PC-9 (cell line): ENCODE measurements at regions of chr2 and their contacts with region 1.

Region 1: DNA sequence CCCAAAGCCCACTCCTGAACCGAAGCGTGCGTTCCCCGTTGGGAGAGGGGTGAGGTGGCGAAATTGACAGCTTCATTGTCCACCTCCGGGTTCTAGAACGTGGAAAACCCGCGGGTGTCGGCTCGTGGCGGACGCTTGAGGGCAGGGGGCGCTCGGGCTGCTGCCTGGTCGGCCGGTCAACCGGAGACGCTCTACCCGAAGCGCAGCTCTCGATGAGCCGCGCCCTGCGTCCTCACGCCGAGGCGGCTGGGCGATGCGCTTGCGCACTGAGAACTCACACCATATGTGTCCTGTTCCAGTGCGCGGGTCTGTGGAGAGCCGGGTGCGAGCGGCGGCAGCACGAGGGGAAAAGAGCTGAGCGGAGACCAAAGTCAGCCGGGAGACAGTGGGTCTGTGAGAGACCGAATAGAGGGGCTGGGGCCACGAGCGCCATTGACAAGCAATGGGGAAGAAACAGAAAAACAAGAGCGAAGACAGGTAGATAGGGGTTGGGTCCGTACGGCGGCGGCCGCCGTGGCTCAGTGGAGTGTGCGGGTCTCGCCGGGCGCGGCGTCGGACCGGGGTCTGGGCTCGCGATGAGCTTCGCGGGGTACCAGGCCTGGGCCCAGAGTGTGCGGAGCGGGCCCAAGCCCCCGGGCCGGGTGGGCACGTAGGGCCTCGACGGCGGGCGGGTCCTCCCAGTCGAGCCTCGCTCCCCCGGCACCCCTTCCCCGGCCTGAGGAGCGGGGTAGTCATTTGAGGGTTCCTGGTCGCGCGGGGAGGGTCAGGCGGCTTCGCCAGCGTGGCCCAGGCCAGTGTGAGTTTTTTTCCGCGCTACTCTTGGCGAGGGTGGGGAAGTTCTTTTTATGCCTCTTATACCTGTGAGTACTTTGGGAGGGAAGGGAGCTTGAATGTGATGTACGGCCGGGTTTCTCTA is at the start of gene EIF5B:
- DNase-seq: peak; percentile 91 to 95
- H3K4me3 ChIP-seq: peak within 1 kb of the TSS; percentile 79
- H3K27ac ChIP-seq: peak within 1 kb of the TSS; percentile 77
- H3K4me1 ChIP-seq: peaks cover 29% of the 10 kb centered on the region
- H3K27me3 ChIP-seq: no peaks in the 10 kb centered on the region
- CTCF ChIP-seq: peak; percentile 75
- total RNA-seq, gene EIF5B: 53.4 and 56.7 TPM in 2 replicates

Region 2: DNA sequence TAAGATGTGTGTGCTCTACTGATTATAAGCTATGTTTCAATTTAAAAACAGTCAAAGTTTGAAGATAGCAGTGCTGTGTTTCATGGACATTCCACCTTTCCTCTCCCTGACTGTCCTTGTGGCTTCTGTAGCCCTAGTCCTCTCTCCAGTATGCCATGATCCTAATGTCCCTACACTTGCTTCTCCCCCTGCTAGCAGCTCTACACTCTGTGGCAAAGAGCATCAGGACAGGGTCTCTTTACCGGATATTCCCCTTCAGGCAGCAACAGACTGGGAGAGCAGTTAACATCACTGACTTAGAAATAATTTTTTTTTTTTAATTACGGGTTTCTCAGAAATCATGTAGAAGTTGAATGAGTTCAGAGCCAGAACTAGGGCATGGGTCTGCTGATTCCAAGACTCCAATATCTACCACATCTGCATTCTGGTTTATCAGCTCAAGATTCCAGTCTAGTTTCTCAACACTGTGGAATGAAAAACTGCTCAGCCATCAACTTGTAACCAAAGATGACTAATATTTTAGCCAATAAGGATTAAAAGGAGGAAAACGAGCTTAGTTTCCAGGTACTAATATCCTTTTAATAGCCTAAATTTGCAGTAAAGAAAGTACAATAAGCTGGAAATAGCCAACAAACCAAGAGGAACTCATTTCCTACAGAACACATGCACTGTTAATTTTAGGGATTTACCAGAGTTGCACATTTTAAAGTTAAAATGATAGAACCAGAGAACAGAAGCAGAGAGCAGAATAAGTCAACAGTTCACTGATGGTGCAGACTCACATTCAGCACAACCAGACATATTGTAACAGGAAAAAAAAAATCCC is 1386.8 kb before region 1 on chr2:
- CTCF ChIA-PET with region 1: no interaction called
- POLR2A ChIA-PET with region 1: interaction called, 11 read pairs
- intact Hi-C with region 1: no loop called
- DNase-seq: peak; percentile 35 to 88
- H3K4me3 ChIP-seq: no peak overlapping the region; the same call in 1 of the 2 replicates
- H3K27ac ChIP-seq: peak overlapping the region; percentile 56
- H3K4me1 ChIP-seq: peaks cover 30% of the 10 kb centered on the region
- H3K27me3 ChIP-seq: no peaks in the 10 kb centered on the region
- CTCF ChIP-seq: no peak

Region 3: DNA sequence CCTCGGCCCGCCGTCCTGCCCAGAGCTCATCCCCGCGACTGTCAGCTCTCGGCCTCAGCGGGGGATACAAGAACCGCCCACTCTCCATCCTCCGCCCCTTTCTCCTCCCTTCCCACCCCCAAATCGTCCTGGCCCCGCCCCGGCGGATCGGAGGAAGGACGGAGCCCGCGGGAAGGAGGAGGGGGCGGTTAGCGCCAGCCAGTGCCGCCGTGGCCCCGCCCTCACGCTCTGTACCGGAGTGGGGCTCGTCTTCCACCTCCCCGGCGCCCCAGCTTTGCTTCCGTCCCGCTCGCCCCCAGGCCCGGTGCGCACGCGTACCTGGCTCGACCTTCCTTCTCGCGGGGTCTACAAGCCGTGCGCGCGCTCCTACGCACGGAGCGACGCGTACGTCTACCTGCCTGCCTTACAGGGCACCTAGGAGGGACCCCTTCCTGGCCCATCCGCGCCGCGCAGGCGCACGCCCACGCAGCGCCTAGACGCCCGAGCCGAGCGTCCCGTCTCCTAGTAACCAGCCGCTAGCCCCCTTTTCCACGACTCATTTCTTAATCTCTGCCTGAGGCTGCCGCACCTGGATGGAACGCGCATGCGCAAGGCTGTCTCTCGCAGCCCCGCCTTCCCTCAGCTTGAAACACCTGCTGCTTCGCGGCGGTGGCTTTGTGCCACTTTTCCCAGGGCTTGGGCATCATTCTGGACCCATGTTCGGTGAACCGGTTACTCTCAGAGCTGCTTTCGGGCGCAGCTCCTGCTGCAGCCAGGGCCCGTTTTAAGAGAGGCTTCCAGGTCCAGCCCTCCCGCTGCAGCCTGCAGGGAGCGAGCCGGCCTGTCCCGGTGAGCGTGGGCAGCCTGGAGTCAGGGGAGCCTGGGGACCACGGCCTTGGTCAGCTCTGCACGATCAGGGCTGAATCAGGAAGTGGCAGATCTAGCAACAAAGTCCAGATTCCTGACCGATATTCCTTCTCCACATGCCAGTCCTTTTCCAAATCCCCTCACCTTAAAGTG is 196.0 kb before region 1 on chr2 and contains the start of gene C2orf15:
- CTCF ChIA-PET with region 1: interaction called, 4 read pairs
- POLR2A ChIA-PET with region 1: interaction called, 8 read pairs
- intact Hi-C with region 1: loop called (anchors 1 kb)
- DNase-seq: peak; percentile 94 to 99
- H3K4me3 ChIP-seq: peak within 1 kb of the TSS; percentile 86
- H3K27ac ChIP-seq: peak within 1 kb of the TSS; percentile 64
- H3K4me1 ChIP-seq: peaks cover 24% of the 10 kb centered on the region
- H3K27me3 ChIP-seq: no peaks in the 10 kb centered on the region
- CTCF ChIP-seq: no peak
- total RNA-seq, gene C2orf15: 16.9 and 18.0 TPM in 2 replicates

Region 4: DNA sequence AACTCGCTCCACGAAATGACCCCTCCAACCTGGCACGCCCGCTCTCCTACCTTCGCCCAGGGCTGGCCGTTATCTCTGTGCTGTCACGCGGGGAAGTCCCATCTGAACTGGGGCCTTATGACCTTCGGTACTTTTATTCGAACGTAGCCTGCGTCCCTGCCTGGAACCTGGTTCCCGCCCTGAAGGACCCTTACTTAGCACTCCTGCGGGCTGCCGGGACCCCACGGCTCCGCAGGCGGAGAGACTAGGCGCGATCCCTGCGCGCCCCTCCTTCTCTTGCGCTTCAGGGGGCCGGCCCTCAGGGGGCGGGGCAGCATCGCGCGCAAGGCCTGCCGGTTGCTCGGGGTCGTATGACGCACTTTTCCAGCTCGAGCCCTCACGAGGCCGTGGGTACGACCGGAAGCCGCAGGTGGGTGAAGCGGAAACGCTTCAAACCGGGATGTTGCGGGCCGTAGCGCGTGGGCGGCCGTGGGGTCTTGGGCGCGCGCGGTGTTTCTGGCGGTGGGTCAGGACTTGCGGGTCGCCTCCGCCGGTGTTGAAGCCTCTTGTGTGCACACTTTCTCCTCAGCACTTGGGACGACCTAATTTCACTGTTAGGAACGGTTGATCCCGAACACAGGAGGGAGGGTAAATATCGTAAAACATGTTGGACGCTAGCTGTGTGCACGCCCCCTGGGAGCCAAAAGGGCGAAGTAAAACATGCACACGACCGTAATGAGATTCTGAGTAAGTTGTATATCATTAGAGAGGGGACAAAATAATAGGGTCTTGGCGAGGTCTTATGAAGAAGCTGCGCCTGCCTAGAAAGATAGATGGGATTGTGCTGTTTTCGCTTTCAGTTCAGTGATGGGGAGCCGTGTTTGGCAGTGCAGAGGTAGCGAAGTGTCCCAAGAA is 182.5 kb before region 1 on chr2 and contains the starts of genes LIPT1 and TSGA10:
- CTCF ChIA-PET with region 1: no interaction called
- POLR2A ChIA-PET with region 1: interaction called, 5 read pairs
- intact Hi-C with region 1: loop called (anchors 1 kb)
- DNase-seq: peak; percentile 81 to 89
- H3K4me3 ChIP-seq: peak within 1 kb of the TSS; percentile 68
- H3K27ac ChIP-seq: peak within 1 kb of the TSS; percentile 77
- H3K4me1 ChIP-seq: peaks cover 18% of the 10 kb centered on the region
- H3K27me3 ChIP-seq: no peaks in the 10 kb centered on the region
- CTCF ChIP-seq: peak; percentile 50
- total RNA-seq, gene LIPT1: 10.3 and 11.6 TPM in 2 replicates
- total RNA-seq, gene TSGA10: 13.5 and 14.9 TPM in 2 replicates

Region 5: GRCh38 chr2:99180755-99181623 is 156.4 kb before region 1 on chr2 and contains the starts of genes MITD1 and MRPL30:
- CTCF ChIA-PET with region 1: interaction called, 12 read pairs
- POLR2A ChIA-PET with region 1: interaction called, 12 read pairs
- intact Hi-C with region 1: no loop called
- DNase-seq: peak; percentile 92 to 93
- H3K4me3 ChIP-seq: peak within 1 kb of the TSS; percentile 84
- H3K27ac ChIP-seq: peak within 1 kb of the TSS; percentile 56
- H3K4me1 ChIP-seq: peaks cover 37% of the 10 kb centered on the region
- H3K27me3 ChIP-seq: no peaks in the 10 kb centered on the region
- CTCF ChIP-seq: no peak
- total RNA-seq, gene MITD1: 35.0 and 37.6 TPM in 2 replicates
- total RNA-seq, gene MRPL30: 50.1 and 52.6 TPM in 2 replicates

Region 6: GRCh38 chr2:100562732-100563720 is 1225.7 kb after region 1 on chr2 and contains the start of gene PDCL3:
- CTCF ChIA-PET with region 1: no interaction called
- POLR2A ChIA-PET with region 1: interaction called, 3 read pairs
- intact Hi-C with region 1: loop called (anchors 10 kb)
- DNase-seq: peak; percentile 97 to 100
- H3K4me3 ChIP-seq: peak within 1 kb of the TSS; percentile 88
- H3K27ac ChIP-seq: peak within 1 kb of the TSS; percentile 82
- H3K4me1 ChIP-seq: peaks cover 16% of the 10 kb centered on the region
- H3K27me3 ChIP-seq: no peaks in the 10 kb centered on the region
- CTCF ChIP-seq: peak; percentile 42; the same call in 1 of the 2 replicates
- total RNA-seq, gene PDCL3: 22.7 and 23.5 TPM in 2 replicates